CD4-positive, alpha-beta T cell (primary cell): ENCODE measurements at regions of chr7 and their contacts with region 1.

Region 1: GRCh38 chr7:70856866-70857630 is 274.9 kb upstream of the GALNT17 start:
- DNase-seq: peak; percentile 5 to 61 (median 24)
- ATAC-seq: no peak
- H3K4me3 ChIP-seq: no peak overlapping the region
- H3K4me3 Mint-ChIP-seq: no peak overlapping the region
- H3K27ac ChIP-seq: no peak overlapping the region
- H3K27ac Mint-ChIP-seq: no peak overlapping the region
- H3K4me1 ChIP-seq: no peaks in the 10 kb centered on the region
- H3K4me1 Mint-ChIP-seq: no peaks in the 10 kb centered on the region
- H3K27me3 ChIP-seq: no peaks in the 10 kb centered on the region
- H3K27me3 Mint-ChIP-seq: peaks cover 5% of the 10 kb centered on the region
- CTCF ChIP-seq: peak; percentile 85

Region 2: DNA sequence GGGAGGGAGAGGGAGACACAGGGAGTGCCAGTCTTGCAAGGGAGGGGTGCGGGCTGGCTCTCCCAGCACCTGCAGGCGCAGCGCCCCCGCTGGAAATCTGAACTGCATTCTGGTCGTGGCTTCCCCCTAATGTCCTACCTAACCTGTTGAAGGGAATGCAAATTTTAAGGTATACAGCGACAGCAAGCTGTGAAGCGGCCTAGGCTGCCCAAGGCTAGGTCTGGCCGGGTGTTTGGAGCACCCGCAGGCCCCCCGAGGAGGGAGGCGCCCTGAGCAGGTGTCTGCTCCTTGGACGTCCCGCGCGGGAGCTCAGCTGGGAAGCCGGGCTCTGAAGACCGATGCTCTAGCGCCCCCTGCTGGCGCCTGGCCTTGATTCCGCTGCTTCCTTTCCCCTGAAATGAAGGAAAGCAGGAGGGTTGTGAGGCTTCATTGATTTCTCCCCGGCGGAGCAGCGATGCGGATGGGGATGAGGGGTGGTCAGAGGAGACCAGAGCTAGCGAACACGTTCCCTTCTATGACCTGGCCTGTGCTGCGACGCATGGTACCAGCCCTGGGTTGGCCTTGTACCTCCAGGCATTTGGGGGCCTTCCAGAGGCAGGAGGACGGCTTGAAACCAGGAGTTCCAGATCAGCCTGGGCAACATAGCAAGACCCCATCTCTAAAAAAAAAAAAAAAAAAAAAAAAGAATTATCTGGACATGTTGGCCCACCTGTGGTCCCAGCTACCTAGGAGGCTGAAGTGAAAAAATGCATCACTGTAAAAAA is 876.2 kb after region 1 on chr7:
- CTCF ChIA-PET with region 1: no interaction called
- POLR2A ChIA-PET with region 1: no interaction called
- intact Hi-C with region 1: loop called in 1 of 2 experiments (anchors 10 kb)
- DNase-seq: peak; percentile 17 to 75 (median 38)
- ATAC-seq: no peak
- H3K4me3 ChIP-seq: no peak overlapping the region
- H3K4me3 Mint-ChIP-seq: no peak overlapping the region
- H3K27ac ChIP-seq: no peak overlapping the region
- H3K27ac Mint-ChIP-seq: no peak overlapping the region
- H3K4me1 ChIP-seq: peaks cover 5% of the 10 kb centered on the region
- H3K4me1 Mint-ChIP-seq: no peaks in the 10 kb centered on the region
- H3K27me3 ChIP-seq: no peaks in the 10 kb centered on the region
- H3K27me3 Mint-ChIP-seq: peaks cover 9% of the 10 kb centered on the region
- CTCF ChIP-seq: peak; percentile 77